ENCODE measurements at regions of chr3 and their contacts with region 1.

Region 1: DNA sequence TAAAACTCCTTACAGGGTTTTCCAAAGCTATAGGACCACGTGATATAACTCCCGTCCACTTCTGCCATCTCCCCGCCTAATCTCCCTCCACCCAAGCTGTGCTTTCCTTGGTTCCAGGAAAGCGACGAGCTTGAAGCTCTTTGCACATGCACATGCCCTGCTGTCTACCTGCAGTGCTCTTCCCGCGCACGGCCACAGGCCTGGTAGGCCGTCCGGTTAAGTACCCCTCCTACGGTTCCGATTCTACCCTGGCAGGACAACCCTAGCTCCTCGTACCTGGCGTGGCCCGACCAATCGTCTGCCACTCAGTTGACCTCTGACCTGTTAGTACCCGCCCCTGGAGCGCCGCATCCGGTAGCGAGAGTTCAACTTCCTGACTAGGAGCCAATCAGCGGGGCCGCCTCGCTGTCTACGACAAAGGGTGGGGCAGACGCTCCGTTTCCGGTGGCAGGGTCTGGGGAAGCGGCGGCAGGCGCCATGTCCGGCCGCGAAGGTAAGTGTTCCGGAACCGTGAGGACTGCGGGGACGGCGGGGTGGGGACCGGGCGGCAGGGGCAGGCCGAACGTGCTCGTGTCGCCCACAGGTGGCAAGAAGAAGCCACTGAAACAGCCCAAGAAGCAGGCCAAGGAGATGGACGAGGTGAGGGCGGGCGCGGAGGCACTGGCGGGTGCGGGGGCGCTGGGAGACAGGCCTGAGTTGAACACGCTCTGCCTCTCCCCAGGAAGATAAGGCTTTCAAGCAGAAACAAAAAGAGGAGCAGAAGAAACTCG is at the starts of genes CCDC51 and TMA7:
- DNase-seq: peak; percentile 98 to 99
- H3K4me3 ChIP-seq: peak within 1 kb of the TSS; percentile 91
- H3K4me3 Mint-ChIP-seq: peak within 1 kb of the TSS; percentile 90
- H3K27ac Mint-ChIP-seq: peak within 1 kb of the TSS; percentile 75
- H3K4me1 ChIP-seq: peaks cover 17% of the 10 kb centered on the region
- H3K4me1 Mint-ChIP-seq: peaks cover 10% of the 10 kb centered on the region
- H3K27me3 ChIP-seq: no peaks in the 10 kb centered on the region
- H3K27me3 Mint-ChIP-seq: no peaks in the 10 kb centered on the region
- CTCF ChIP-seq: no peak
- total RNA-seq, gene CCDC51: 48.9 and 59.5 TPM in 2 replicates
- total RNA-seq, gene TMA7: 205 and 227 TPM in 2 replicates

Region 2: GRCh38 chr3:48232734-48233133 is 207.3 kb before region 1 on chr3:
- CTCF ChIA-PET with region 1: interaction called, 9 read pairs
- POLR2A ChIA-PET with region 1: no interaction called
- intact Hi-C with region 1: loop called (anchors 1 kb)
- DNase-seq: peak; percentile 85 to 87
- H3K4me3 ChIP-seq: no peak overlapping the region
- H3K4me3 Mint-ChIP-seq: peak overlapping the region; percentile 49
- H3K27ac Mint-ChIP-seq: peak overlapping the region; percentile 68
- H3K4me1 ChIP-seq: peaks cover 9% of the 10 kb centered on the region
- H3K4me1 Mint-ChIP-seq: peaks cover 18% of the 10 kb centered on the region
- H3K27me3 ChIP-seq: no peaks in the 10 kb centered on the region
- H3K27me3 Mint-ChIP-seq: no peaks in the 10 kb centered on the region
- CTCF ChIP-seq: peak; percentile 59 to 69

Region 3: DNA sequence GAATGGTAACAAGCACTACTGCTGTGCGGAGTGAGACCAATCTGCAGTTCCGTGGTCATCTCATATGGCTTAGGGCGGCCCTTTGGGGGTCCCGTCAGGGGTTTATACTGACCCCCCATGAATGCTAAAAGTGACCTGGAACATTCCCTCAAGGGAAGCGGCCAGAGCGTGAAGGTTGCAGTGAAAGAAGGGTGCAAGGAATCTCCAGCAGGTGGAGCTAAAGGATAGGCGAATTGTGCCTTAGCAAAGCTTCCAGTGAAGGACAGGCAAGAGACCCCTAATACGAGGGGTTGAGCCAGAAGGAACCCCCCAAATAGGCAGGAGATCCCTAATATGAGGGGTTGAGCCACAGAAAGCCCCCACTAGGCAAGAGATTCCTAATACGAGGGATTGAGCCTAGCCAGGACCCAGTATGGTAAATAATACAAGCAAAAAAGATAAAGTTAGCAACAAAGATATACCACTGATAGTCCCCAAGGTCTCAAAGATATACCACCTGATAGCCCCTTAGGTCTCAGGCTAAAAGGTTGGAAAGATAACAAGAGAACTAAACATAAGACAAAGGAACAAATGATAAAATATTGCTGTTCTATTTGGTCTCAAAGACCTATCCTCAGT is 166.3 kb before region 1 on chr3:
- CTCF ChIA-PET with region 1: interaction called, 71 read pairs
- POLR2A ChIA-PET with region 1: interaction called, 6 read pairs
- intact Hi-C with region 1: loop called (anchors 1 kb)
- DNase-seq: peak; percentile 60 to 77
- H3K4me3 ChIP-seq: no peak overlapping the region
- H3K4me3 Mint-ChIP-seq: no peak overlapping the region
- H3K27ac Mint-ChIP-seq: no peak overlapping the region
- H3K4me1 ChIP-seq: peaks cover 32% of the 10 kb centered on the region
- H3K4me1 Mint-ChIP-seq: peaks cover 35% of the 10 kb centered on the region
- H3K27me3 ChIP-seq: no peaks in the 10 kb centered on the region
- H3K27me3 Mint-ChIP-seq: no peaks in the 10 kb centered on the region
- CTCF ChIP-seq: peak; percentile 79 to 80

Region 4: DNA sequence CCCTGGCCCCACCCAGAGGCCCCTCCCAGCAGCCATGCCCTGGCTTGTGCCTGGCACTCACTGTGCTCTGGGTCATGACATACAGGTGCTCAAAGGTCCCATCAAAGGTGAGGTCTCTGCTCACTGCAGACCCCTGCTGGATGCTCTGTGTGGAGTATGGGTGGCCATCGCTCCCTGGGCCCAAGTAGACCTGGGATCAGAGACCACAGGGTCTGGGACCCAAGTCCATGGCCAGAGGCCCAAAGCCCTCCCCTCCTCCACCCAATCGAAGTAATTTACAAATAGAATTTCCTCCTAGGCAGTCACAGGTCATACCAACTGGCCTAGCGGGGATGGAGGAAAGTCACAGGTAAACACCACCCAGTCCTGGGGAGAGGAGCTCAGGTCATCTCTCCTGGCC is 17.7 kb before region 1 on chr3:
- CTCF ChIA-PET with region 1: interaction called, 40 read pairs
- POLR2A ChIA-PET with region 1: no interaction called
- intact Hi-C with region 1: no loop called
- DNase-seq: peak in 1 of 2 experiments; percentile 35
- H3K4me3 ChIP-seq: no peak overlapping the region
- H3K4me3 Mint-ChIP-seq: no peak overlapping the region
- H3K27ac Mint-ChIP-seq: no peak overlapping the region
- H3K4me1 ChIP-seq: peaks cover 12% of the 10 kb centered on the region
- H3K4me1 Mint-ChIP-seq: peaks cover 22% of the 10 kb centered on the region
- H3K27me3 ChIP-seq: no peaks in the 10 kb centered on the region
- H3K27me3 Mint-ChIP-seq: no peaks in the 10 kb centered on the region
- CTCF ChIP-seq: peak in 1 of 2 experiments; percentile 35

Region 5: DNA sequence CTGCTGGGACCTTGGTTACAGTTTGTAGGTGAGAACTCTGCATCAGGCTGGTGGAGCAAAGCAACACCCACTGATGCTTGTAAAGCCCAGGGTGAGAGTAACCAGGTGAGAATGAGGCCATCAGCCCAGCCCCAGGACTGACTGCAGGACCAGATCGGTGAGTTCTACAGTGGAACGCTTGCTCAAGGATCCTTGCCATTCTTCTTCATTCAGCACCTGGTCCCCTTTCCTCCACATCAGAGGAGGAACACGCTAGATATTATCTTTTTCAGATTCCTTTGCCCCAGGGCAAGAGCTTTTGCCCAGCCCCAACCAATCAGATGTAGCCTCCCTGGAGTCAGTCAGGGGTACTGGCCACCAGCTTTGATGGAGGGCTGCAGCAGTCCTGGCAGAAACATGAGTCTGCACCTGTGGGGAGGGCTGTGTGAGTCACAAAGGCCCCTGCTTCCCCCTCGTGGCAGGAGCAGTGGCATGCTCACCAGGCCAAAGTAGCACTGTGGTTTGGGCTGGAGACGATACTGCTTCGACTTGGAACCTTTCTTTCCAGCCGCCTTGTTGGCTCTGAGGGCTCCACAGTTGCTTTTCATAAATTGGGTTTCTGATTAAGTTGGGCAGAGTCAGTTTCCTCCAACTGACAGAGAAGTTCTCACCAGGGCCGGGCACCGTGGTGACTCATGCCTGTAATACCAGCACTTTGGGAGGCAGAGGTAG is 67.5 kb after region 1 on chr3:
- CTCF ChIA-PET with region 1: interaction called, 10 read pairs
- POLR2A ChIA-PET with region 1: interaction called, 4 read pairs
- intact Hi-C with region 1: no loop called
- DNase-seq: peak; percentile 90 to 93
- H3K4me3 ChIP-seq: no peak overlapping the region
- H3K4me3 Mint-ChIP-seq: peak overlapping the region; percentile 7
- H3K27ac Mint-ChIP-seq: peak overlapping the region; percentile 67
- H3K4me1 ChIP-seq: peaks cover 35% of the 10 kb centered on the region
- H3K4me1 Mint-ChIP-seq: peaks cover 14% of the 10 kb centered on the region
- H3K27me3 ChIP-seq: no peaks in the 10 kb centered on the region
- H3K27me3 Mint-ChIP-seq: no peaks in the 10 kb centered on the region
- CTCF ChIP-seq: peak; percentile 81 to 91

Measured in Caco-2 (cell line).